PC-3 (cell line): ENCODE measurements at regions of chr5 and their contacts with region 1.

Region 1: GRCh38 chr5:10452768-10453331 is 11.2 kb downstream of the ROPN1L start:
- DNase-seq: peak; percentile 98
- ATAC-seq: peak; percentile 47
- H3K4me3 ChIP-seq: peak overlapping the region; percentile 3; the same call in 1 of the 2 replicates
- H3K27ac ChIP-seq: peak overlapping the region; percentile 35
- H3K4me1 ChIP-seq: peaks cover 49% of the 10 kb centered on the region
- H3K27me3 ChIP-seq: no peaks in the 10 kb centered on the region
- CTCF ChIP-seq: peak; percentile 99

Region 2: GRCh38 chr5:10432059-10433008 is 20.5 kb before region 1 on chr5:
- CTCF ChIA-PET with region 1: no interaction called
- POLR2A ChIA-PET with region 1: no interaction called
- intact Hi-C with region 1: no loop called
- DNase-seq: no peak
- ATAC-seq: no peak
- H3K4me3 ChIP-seq: no peak overlapping the region
- H3K27ac ChIP-seq: no peak overlapping the region
- H3K4me1 ChIP-seq: no peaks in the 10 kb centered on the region
- H3K27me3 ChIP-seq: no peaks in the 10 kb centered on the region
- CTCF ChIP-seq: no peak

Region 3: DNA sequence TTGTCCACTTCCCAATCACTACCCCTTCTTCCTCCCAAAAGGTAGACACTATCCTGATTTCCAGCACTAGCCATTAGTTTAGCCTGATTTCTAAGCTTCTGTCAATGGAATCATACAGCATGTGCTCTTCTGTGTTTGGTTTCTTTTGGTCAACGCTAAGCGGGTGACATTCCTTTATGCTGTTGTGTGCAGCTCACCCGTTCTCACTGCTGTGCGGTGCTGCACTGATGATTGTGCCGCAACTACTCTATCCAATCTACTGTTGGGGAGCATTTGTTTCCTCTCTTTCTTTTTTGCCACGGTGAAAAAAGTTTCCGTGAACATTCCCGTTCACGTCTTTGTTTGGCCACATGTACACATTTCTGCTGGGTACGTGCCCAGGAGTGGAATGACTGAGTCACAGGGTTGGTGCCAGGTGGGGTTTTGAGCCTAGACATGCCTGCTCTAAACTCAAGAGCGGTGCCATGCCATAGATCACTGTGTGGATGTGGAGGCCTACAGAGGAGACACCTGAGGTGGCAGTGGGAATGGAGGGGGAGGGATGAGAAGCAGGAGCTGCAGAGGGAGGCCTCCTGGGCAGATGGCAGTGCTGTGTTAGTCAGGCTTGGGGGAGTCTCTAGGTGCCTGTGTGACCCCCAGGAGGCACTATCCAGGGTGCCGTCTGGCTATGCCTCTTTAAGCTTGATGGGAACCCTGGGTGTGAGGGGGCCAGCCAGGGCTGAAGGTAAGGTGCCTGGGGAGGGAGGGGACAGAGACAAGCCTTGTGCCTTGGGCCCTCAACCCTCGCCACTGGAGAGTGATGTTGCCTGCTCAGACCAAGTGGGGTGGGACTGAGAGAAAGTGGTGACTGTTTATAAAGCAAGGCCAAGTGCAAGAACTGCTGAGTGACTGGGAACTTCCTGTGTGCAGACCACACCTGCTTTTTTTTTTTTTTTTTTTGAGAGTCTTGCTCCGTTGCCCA is 99.6 kb after region 1 on chr5:
- CTCF ChIA-PET with region 1: no interaction called
- POLR2A ChIA-PET with region 1: interaction called, 5 read pairs
- intact Hi-C with region 1: loop called (anchors 2 kb)
- DNase-seq: peak; percentile 61
- ATAC-seq: no peak
- H3K4me3 ChIP-seq: no peak overlapping the region
- H3K27ac ChIP-seq: peak overlapping the region; percentile 92
- H3K4me1 ChIP-seq: peaks cover 71% of the 10 kb centered on the region
- H3K27me3 ChIP-seq: no peaks in the 10 kb centered on the region
- CTCF ChIP-seq: no peak

Region 4: GRCh38 chr5:10627160-10627701 is 174.4 kb after region 1 on chr5:
- CTCF ChIA-PET with region 1: interaction called, 38 read pairs
- POLR2A ChIA-PET with region 1: interaction called, 3 read pairs
- intact Hi-C with region 1: loop called (anchors 1 kb)
- DNase-seq: no peak
- ATAC-seq: peak; percentile 21
- H3K4me3 ChIP-seq: peak overlapping the region; percentile 59
- H3K27ac ChIP-seq: peak overlapping the region; percentile 1; the same call in 1 of the 2 replicates
- H3K4me1 ChIP-seq: peaks cover 12% of the 10 kb centered on the region
- H3K27me3 ChIP-seq: no peaks in the 10 kb centered on the region
- CTCF ChIP-seq: no peak

Region 5: GRCh38 chr5:10746711-10747110 is 293.9 kb after region 1 on chr5:
- CTCF ChIA-PET with region 1: no interaction called
- POLR2A ChIA-PET with region 1: no interaction called
- intact Hi-C with region 1: no loop called
- DNase-seq: no peak
- ATAC-seq: no peak
- H3K4me3 ChIP-seq: no peak overlapping the region
- H3K27ac ChIP-seq: no peak overlapping the region
- H3K4me1 ChIP-seq: no peaks in the 10 kb centered on the region
- H3K27me3 ChIP-seq: no peaks in the 10 kb centered on the region
- CTCF ChIP-seq: no peak

Region 6: DNA sequence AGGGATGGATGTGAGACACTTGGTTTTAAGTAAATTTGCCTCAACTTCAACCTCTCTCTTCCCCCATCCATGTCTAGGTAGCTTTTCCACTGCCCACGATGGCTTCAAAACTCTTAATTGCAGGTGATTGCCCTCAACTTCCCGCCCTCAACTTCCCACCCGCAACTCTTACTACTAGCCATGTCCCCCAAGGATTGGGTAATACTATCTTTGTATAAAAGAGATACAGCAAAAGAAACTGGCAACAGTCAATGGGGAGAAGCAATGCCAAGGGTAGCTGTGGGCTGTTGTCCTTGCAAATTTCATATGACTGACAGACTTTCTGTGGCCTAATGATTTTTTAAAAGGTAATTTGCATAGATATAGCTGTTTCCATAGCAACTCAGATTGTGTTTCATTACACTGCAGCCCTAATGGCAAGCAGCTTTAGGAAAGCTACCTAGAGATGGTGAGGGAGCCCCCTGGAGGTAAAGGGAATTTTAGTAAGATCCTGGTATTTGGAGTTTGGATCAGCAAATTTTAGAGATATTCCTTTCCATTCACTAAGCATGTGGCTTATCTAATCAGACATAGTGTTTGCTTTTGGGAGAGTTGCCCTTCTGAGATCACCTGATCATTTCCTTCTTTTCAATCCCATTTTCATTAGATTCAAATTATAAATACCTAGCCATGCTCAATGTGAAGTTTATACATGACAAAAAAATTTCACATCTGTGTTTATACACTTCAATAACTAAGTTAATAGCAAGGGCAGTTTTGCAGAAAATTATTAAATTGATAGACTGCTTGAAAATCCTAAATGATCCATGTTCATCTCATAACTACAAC is 729.8 kb after region 1 on chr5:
- CTCF ChIA-PET with region 1: no interaction called
- POLR2A ChIA-PET with region 1: no interaction called
- intact Hi-C with region 1: loop called (anchors 5 kb)
- DNase-seq: peak; percentile 80
- ATAC-seq: peak; percentile 69
- H3K4me3 ChIP-seq: no peak overlapping the region
- H3K27ac ChIP-seq: no peak overlapping the region
- H3K4me1 ChIP-seq: no peaks in the 10 kb centered on the region
- H3K27me3 ChIP-seq: no peaks in the 10 kb centered on the region
- CTCF ChIP-seq: peak; percentile 97